Left ventricle myocardium superior (tissue), 1 donor: ENCODE measurements at regions of chr12 and their contacts with region 1.

Region 1: GRCh38 chr12:95820102-95820703 is 29.6 kb upstream of the NTN4 start:
- DNase-seq: no peak
- ATAC-seq: no peak

Region 2: DNA sequence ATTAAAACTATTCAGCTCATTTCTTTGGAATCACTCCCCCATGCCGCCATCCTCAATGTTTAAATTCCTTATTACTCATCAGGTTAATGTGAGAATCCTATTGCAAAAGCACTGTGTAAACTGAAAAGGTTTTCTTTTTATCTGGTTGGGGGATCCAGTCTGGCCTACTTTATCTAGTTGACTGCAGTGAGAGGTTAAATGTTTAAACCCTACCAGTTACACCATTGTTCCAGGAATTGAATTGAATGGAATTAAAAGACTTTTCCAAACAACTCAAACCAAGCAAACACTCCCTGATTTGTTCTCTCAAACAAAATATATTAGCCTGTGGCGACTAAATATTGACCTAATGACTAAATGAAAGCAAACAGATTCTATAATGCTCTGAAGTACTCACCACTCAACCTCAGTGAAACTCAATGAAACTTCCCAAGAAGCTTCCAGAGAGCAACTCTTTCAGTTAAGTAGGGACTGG is 502.1 kb before region 1 on chr12:
- intact Hi-C with region 1: no loop called
- DNase-seq: no peak
- ATAC-seq: no peak

Region 3: DNA sequence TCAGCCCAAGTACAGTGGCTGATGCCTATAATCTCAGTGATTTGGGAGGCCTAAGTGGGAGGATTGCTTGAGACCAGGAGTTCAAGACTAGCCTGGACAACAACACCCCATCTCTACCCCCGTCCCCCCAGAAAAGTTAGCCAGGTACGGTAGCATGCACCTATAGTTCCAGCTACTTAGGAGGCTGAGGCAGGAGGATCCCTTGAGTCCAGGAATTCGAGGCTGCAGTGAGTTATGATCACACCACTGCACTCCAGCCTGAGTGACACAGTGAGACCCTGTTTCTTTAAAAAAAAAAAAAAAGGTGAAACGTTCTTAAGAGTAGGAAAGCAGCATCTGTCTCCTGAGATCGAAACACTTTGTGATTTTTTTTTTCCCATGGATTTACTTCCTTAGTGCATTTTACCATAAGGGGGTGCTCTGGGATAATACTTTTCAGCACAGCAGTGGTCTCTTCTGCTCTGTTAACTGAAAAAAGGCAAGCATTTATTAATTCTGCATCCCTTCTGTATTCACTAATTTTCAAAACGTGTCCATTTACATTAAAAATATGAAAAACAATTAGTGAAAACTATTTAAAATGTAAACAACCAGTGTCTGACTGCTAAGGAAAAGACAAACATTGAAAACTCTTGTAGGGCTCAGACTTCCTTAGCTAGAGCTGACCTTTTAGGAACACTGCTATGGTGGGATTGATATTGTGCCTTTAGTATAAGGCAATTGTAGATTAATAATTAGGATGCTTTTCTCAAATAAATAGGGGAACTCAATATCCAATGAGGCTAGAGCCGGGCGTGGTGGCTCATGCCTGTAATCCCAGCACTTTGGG is 237.8 kb before region 1 on chr12:
- intact Hi-C with region 1: loop called (anchors 5 kb)
- DNase-seq: no peak
- ATAC-seq: peak; percentile 70

Region 4: GRCh38 chr12:95998611-95999286 is 178.5 kb after region 1 on chr12:
- intact Hi-C with region 1: loop called (anchors 10 kb)
- DNase-seq: no peak
- ATAC-seq: peak; percentile 91